Gastrocnemius medialis (tissue), 4 donors: ENCODE measurements at regions of chr7 and their contacts with region 1.

Region 1: GRCh38 chr7:38222481-38223096 is 44.5 kb downstream of the STARD3NL start:
- DNase-seq: no peak
- ATAC-seq: peak; percentile 81 to 88
- H3K4me3 ChIP-seq: no peak overlapping the region
- H3K27ac ChIP-seq: peak overlapping the region in 2 of 4 donors; percentile 3
- H3K4me1 ChIP-seq: peaks cover 0 to 5% of the 10 kb centered on the region in 2 donors
- H3K27me3 ChIP-seq: no peaks in the 10 kb centered on the region
- CTCF ChIP-seq: peak; percentile 74 to 96 (median 89)
- POLR2A ChIP-seq: no peak

Region 2: GRCh38 chr7:37901236-37901827 is 321.3 kb before region 1 on chr7:
- in situ Hi-C with region 1: loop called in 3 of 4 experiments (anchors 10 to 25 kb)
- intact Hi-C with region 1: loop called (anchors 5 kb)
- DNase-seq: no peak
- ATAC-seq: peak in 1 of 2 donors; percentile 53
- H3K4me3 ChIP-seq: no peak overlapping the region
- H3K27ac ChIP-seq: no peak overlapping the region
- H3K4me1 ChIP-seq: peaks cover 5 to 12% of the 10 kb centered on the region in 2 donors
- H3K27me3 ChIP-seq: no peaks in the 10 kb centered on the region
- CTCF ChIP-seq: peak; percentile 33 to 59 (median 38)
- POLR2A ChIP-seq: no peak

Region 3: DNA sequence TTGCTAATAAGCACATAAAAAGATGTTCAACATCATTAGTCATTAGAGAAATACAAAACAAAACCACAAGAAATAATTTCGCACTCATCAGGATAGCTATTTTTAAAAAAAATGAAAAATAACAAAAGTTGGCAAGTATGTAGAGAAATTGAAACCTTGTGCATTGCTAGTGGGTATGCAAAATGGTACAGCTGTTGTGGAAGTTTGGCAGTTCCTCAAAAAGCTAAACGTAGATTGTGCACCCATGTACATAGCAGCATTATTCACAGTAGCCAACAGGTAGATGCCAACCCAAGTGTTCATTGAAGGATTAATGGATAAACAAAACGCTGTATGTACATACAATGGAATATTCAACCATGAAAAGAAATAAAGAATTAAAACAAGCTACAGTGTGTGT is 79.9 kb before region 1 on chr7:
- in situ Hi-C with region 1: no loop called
- intact Hi-C with region 1: no loop called
- DNase-seq: no peak
- ATAC-seq: no peak
- H3K4me3 ChIP-seq: no peak overlapping the region
- H3K27ac ChIP-seq: no peak overlapping the region
- H3K4me1 ChIP-seq: no peaks in the 10 kb centered on the region
- H3K27me3 ChIP-seq: no peaks in the 10 kb centered on the region
- CTCF ChIP-seq: no peak
- POLR2A ChIP-seq: no peak

Region 4: DNA sequence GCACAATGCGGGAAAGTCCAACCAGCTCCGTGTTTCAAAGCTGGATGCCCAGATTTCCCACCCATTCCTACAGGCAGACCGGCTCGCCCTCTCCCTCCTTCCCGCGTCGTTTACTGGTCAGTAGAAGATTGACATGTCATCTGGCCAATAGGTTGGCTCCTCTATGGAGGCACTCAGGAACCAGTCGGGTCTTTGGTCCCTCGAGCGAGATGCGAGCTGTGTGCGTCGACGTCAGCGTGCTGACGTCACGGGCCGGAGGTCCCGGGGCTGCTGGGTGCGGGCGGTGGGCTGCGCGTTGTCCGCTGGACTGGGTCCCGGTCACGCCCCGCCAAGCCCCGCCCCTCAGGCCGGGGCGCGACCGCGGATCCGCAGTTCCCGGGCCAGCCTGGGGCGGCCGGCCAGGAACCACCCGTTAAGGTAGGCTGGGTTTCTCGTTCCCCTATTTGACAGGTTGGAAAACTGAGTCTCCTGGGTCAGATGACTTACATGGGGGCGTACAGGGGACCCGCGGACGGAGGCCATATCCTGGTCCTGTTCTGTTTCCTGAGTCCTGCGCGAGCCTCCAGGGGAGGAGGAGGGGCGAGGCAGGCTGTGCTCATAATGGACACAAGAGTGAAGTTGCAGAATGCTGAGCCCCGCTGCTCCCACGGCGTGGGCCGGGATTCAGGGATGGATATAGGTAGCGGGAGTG is 44.4 kb before region 1 on chr7 and contains the start of gene STARD3NL:
- in situ Hi-C with region 1: loop called in 1 of 4 experiments (anchors 10 kb)
- intact Hi-C with region 1: no loop called
- DNase-seq: peak; percentile 98 to 99
- ATAC-seq: peak; percentile 99 to 100
- H3K4me3 ChIP-seq: peak within 1 kb of the TSS; percentile 66 to 96 (median 85)
- H3K27ac ChIP-seq: peak within 1 kb of the TSS; percentile 85 to 96 (median 89)
- H3K4me1 ChIP-seq: peaks cover 24 to 33% of the 10 kb centered on the region in 2 donors
- H3K27me3 ChIP-seq: no peaks in the 10 kb centered on the region
- CTCF ChIP-seq: peak in 2 of 5 experiments; percentile 5 to 32
- POLR2A ChIP-seq: peak; percentile 70 to 76
- total RNA-seq, gene STARD3NL: 18.1 to 22.0 (median 19.7) TPM